Activated CD4-positive, alpha-beta T cell treated with anti-CD3 and anti-CD28 coated beads for 36 hours (primary cell): ENCODE measurements at regions of chr15 and their contacts with region 1.

Region 1: DNA sequence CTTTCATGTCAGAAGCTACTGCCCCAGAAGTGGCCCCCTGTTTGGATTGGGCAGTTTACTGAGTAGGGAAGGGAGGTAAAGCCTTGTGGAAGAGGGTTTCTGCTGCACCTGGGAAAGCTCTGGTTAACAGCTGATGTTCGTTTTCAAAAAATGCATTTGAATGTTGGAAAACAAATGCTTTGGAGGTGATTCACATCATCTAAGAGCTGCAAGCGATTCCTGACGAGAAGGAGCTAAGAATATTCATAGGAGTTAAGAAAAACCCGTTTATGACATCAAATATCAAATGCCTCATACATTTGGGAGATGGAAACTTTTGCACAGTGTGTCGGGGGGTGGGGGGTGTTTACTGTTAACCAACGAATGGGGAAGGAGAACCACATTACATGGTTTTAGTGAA is 183.8 kb upstream of the NR2F2 start:
- DNase-seq: no peak
- ATAC-seq: no peak
- H3K4me3 Mint-ChIP-seq: no peak overlapping the region
- H3K27ac Mint-ChIP-seq: no peak overlapping the region
- H3K4me1 Mint-ChIP-seq: no peaks in the 10 kb centered on the region
- H3K27me3 Mint-ChIP-seq: peaks cover 6% of the 10 kb centered on the region

Region 2: DNA sequence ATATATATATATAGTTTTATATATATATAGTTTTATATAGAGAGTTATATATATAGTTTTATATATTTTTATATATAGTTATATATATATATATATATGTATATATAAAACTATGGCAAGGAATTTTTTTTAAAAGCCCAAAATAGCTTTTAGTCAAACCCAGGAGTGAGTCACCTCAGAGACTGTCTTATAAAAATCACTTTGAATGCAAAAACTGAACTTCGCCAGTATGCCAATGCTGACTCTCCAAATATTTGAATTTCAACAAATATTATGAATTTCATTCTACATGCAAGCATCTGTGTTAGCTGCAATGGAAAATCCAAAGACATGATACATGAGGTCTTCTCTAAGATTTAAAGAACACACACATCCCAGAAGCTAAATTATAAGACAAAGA is 51.0 kb after region 1 on chr15:
- CTCF ChIA-PET with region 1: no interaction called
- POLR2A ChIA-PET with region 1: no interaction called
- intact Hi-C with region 1: loop called in 1 of 2 experiments (anchors 5 kb)
- DNase-seq: no peak
- ATAC-seq: no peak
- H3K4me3 Mint-ChIP-seq: no peak overlapping the region
- H3K27ac Mint-ChIP-seq: no peak overlapping the region
- H3K4me1 Mint-ChIP-seq: no peaks in the 10 kb centered on the region
- H3K27me3 Mint-ChIP-seq: peaks cover 6% of the 10 kb centered on the region